GM12878 (cell line): ENCODE measurements at regions of chr17 and their contacts with region 1.

Region 1: DNA sequence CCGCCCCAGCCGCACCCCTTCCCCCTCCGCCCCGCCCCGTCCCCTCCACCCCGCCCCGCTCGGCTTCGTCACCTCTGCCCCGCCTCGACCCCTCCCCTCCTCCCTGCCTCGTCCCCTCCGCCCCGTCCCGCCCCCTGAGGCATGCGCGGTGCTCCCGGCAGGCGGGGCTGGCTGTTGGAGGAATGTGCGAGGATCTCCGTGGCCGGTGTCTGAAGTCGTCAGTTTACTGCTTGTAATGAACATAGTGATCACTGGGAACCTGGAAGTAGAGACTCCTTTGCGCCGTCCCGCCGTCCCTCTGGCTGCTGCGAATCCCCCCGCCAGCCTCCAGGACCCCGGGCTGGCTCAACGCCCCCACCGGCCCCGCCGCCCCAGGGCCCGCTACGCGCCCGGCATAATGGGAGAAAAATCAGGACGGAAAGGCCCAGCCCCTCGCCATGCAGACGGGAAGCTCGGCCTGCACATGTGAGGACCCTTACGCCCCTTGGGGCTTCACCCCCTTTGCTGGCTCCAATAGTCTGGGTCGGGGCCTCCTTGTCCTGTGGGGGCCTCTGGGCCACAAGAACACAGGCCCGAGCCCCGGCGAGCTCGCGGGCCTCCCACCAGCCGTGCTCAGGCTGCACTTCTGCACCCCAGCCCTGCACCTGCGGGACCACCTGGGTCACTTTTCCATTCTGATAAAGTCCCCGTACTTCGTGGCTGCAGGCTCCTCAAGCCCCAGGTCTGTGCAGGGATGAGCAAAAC is 743.1 kb downstream of the KCNJ18 start:
- DNase-seq: no peak
- ATAC-seq: no peak
- H3K4me3 ChIP-seq: no peak overlapping the region
- H3K27ac ChIP-seq: no peak overlapping the region
- H3K4me1 ChIP-seq: no peaks in the 10 kb centered on the region
- H3K27me3 ChIP-seq: no peaks in the 10 kb centered on the region
- CTCF ChIP-seq: no peak
- EP300 ChIP-seq: no peak
- POLR2A ChIP-seq: no peak
- RAD21 ChIP-seq: no peak

Region 2: GRCh38 chr17:22300731-22301352 is 134.6 kb before region 1 on chr17:
- CTCF ChIA-PET with region 1: no interaction called
- POLR2A ChIA-PET with region 1: no interaction called
- RAD21 ChIA-PET with region 1: no interaction called
- SMC1A ChIA-PET with region 1: no interaction called
- in situ Hi-C with region 1: no loop called
- intact Hi-C with region 1: no loop called
- DNase-seq: no peak
- ATAC-seq: no peak
- H3K4me3 ChIP-seq: no peak overlapping the region
- H3K27ac ChIP-seq: no peak overlapping the region
- H3K4me1 ChIP-seq: no peaks in the 10 kb centered on the region
- H3K27me3 ChIP-seq: no peaks in the 10 kb centered on the region
- CTCF ChIP-seq: no peak
- EP300 ChIP-seq: no peak
- POLR2A ChIP-seq: no peak
- RAD21 ChIP-seq: no peak

Region 3: DNA sequence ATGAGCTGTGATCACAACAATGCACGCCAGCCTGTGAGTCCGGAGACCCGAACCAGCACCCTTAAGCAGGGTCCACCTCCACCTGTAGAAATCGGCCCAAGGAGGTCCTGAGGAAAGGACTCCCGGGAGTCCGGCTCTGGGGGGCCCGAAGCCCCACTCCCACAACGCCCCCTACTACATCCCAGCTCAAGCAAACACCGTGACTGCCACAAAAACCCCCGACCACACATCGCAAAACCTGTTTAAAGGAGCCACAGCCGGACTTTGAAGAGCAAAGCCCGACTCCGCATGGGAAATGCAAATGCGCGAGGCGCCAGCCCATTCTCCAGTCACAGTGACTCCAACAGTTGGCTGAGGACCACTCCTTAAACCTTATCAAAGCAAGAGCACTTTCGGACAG is 60.7 kb before region 1 on chr17:
- CTCF ChIA-PET with region 1: no interaction called
- POLR2A ChIA-PET with region 1: no interaction called
- RAD21 ChIA-PET with region 1: no interaction called
- SMC1A ChIA-PET with region 1: no interaction called
- in situ Hi-C with region 1: no loop called
- intact Hi-C with region 1: no loop called
- DNase-seq: no peak
- ATAC-seq: no peak
- H3K4me3 ChIP-seq: no peak overlapping the region
- H3K27ac ChIP-seq: no peak overlapping the region
- H3K4me1 ChIP-seq: no peaks in the 10 kb centered on the region
- H3K27me3 ChIP-seq: no peaks in the 10 kb centered on the region
- CTCF ChIP-seq: no peak
- EP300 ChIP-seq: no peak
- POLR2A ChIP-seq: no peak
- RAD21 ChIP-seq: no peak

Region 4: DNA sequence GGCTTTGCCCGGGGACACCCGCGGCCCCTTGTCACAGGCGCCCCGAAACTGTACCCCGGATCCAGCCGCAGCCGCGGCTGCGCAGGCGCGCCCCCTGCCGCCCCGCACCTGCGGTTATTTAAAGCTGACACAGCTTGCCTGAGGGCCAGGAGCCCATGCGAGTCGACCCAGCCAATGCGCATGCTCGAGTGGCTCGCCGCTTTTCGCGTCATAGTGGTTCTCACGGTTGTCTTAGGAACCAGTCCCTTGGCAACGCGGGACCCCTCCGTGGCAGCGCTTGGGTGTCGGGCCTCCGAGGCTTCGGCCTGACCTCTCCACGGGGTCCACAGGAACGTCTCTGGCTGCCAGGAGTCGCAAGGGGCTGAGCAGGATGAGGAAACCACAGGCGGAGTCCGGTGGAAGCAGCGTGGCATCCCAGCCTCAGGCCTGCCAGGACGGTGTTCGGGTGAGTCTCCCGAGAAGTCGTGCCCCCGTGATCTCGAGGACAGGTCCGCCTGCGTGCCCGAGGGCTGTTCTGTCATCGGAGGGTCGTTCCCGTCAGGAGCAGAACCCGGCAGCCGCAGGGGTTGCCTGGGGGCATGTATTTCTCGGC is 26.1 kb before region 1 on chr17:
- CTCF ChIA-PET with region 1: no interaction called
- POLR2A ChIA-PET with region 1: no interaction called
- RAD21 ChIA-PET with region 1: no interaction called
- SMC1A ChIA-PET with region 1: no interaction called
- in situ Hi-C with region 1: no loop called
- intact Hi-C with region 1: no loop called
- DNase-seq: no peak
- ATAC-seq: no peak
- H3K4me3 ChIP-seq: no peak overlapping the region
- H3K27ac ChIP-seq: no peak overlapping the region
- H3K4me1 ChIP-seq: no peaks in the 10 kb centered on the region
- H3K27me3 ChIP-seq: no peaks in the 10 kb centered on the region
- CTCF ChIP-seq: no peak
- EP300 ChIP-seq: no peak
- POLR2A ChIP-seq: no peak
- RAD21 ChIP-seq: no peak

Region 5: GRCh38 chr17:22484826-22485225 is 49.4 kb after region 1 on chr17:
- CTCF ChIA-PET with region 1: no interaction called
- POLR2A ChIA-PET with region 1: no interaction called
- RAD21 ChIA-PET with region 1: no interaction called
- SMC1A ChIA-PET with region 1: no interaction called
- in situ Hi-C with region 1: loop called (anchors 5 kb)
- intact Hi-C with region 1: no loop called
- DNase-seq: no peak
- ATAC-seq: no peak
- H3K4me3 ChIP-seq: no peak overlapping the region
- H3K27ac ChIP-seq: no peak overlapping the region
- H3K4me1 ChIP-seq: no peaks in the 10 kb centered on the region
- H3K27me3 ChIP-seq: no peaks in the 10 kb centered on the region
- CTCF ChIP-seq: no peak
- EP300 ChIP-seq: no peak
- POLR2A ChIP-seq: no peak
- RAD21 ChIP-seq: no peak